Posterior cingulate gyrus (tissue), 11 donors: ENCODE measurements at regions of chr7 and their contacts with region 1.

Region 1: GRCh38 chr7:48035301-48035966 is at the start of gene C7orf57:
- DNase-seq: peak; percentile 80 to 98 (median 88)

Region 2: GRCh38 chr7:47819607-47819920 is 215.9 kb before region 1 on chr7:
- intact Hi-C with region 1: no loop called
- DNase-seq: no peak

Region 3: DNA sequence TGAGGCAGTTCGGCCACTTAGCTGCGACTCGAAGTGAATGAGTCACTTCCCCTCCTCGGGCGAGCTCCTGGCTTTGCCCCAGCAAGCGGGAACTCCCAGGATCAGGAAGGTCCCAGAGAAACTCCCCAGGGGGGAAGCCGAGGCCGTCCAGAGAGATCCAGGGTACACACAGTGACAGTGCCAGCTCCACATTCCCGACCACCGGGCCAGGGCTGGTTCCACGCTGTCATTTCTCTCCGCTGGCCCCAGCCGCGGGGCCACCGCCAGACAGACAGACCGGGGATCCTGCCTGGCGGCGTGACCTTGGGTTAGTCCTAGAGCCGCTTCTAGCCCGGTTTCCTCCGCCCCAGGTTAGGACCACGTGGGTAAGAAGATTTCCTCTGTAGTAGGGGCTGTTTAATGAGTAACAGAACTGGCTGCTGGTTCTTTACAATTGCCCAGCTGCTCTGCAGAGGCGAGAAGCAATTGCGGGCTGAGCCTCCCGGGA is 53.2 kb after region 1 on chr7:
- intact Hi-C with region 1: loop called (anchors 5 kb)
- DNase-seq: peak in 9 of 10 donors; percentile 26 to 92 (median 52)

Region 4: DNA sequence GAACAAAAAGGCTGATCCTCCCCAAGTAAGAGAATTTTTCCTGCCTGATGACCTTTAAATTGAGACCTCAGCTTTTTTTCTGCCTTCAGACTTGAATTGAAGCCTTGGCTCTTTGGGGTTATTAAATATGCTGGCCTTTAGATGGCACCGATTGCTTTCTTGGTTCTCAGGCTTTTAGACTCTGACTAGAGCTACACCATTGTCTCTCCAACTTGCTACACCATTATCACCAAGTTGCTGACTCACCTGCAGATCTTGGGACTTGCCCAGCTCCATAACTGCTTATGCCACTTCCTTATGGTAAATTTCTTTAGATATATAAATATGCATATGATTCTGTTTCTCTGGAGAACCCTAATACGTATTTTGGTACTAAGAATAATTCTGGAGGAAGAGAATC is 132.7 kb after region 1 on chr7:
- intact Hi-C with region 1: no loop called
- DNase-seq: no peak